ENCODE measurements at regions of chr2 and their contacts with region 1.

Region 1: DNA sequence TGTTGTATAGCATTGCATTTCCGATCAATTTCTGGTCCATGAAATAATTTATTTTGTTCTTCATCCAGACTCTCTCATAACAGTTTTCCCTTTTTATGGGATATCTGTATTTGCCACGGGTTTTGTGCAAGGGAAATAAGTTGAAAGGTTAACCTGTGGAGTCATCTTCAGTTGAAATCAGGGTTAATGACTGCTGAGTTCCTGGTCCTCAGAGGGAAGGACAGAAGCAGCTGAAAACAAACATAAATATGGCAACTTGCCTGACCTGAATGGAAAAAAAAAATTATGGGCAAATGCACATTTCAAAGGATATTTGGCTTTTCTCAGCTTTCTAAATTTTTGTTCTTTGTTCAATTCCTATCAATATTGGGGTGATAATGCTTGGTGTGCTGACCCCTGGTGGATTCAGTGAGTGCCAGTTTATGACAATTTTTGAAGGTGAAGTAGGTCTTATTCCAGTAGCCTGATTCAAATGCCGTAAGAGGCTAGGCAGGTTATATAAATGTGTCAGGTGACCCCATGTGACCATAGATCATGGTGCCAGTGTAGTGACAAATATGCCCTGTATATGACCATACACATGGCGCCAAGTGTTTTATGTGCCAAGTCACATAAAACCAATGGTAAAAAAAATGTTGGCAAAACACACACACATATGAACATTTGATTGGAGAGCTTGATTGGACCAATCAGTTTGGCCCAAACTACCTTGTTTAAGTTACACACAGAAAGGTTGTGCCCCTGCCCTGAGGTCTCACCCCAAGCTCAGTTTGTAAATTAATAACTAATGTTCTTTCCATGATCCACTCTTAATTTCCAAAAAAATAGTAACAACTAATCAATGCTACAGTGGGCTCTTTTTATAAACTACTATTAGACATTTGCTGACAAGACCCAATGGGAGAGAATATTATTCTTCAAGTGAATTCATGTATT is 47.6 kb upstream of the FAM124B start:
- DNase-seq: no peak
- ATAC-seq: no peak

Region 2: DNA sequence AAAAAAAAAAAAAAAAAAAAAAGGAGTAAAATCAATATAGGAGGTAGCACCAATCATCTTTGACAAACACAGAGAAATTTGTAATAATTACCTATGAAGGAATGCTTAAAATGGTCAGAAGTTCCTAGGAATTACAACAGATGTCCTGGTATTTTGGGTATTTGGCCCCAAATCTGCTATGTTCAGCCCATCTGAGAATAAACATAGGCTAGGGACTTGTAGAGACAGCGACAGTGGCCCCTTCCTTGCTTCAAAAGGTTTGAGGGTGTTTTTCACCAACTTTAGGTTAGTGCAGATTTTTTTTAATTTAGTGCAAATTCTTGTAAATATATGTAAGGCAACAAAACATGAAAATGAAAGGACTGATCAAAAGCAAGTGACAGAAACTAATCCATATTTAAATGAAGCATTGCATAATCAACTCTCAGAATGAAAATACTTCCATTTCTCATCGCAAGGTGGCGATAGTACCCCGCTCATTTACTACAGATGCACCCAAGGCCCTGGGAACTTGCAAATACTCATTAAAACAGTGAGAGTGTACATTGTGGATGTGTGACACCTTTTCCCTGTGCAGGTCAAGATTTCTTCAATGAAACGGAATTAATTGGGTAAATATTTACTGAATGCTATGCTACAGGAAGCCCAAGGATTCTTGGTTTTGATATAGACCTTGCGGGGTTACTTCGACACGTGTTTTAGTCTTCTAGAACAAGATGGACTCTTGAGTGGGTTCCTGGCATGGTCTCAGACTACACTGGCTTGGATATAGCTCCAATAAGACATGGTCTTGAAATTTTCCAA is 92.2 kb before region 1 on chr2:
- intact Hi-C with region 1: loop called (anchors 5 kb)
- DNase-seq: no peak
- ATAC-seq: no peak

Region 3: GRCh38 chr2:224369028-224369632 is 80.3 kb before region 1 on chr2:
- intact Hi-C with region 1: loop called (anchors 5 kb)
- DNase-seq: no peak
- ATAC-seq: no peak

Region 4: GRCh38 chr2:224492531-224492930 is 43.1 kb after region 1 on chr2:
- intact Hi-C with region 1: no loop called
- DNase-seq: no peak
- ATAC-seq: no peak

Region 5: GRCh38 chr2:224611938-224612337 is 162.5 kb after region 1 on chr2:
- intact Hi-C with region 1: no loop called
- DNase-seq: no peak
- ATAC-seq: no peak

Measured in Right ventricle myocardium inferior (tissue), 1 donor.